ENCODE measurements at regions of chr3 and their contacts with region 1.

Region 1: GRCh38 chr3:190996181-190996775 is 133.8 kb upstream of the GMNC start:
- DNase-seq: no peak
- H3K4me3 ChIP-seq: no peak overlapping the region
- H3K27ac ChIP-seq: peak overlapping the region; percentile 54
- H3K4me1 ChIP-seq: peaks cover 37% of the 10 kb centered on the region
- H3K27me3 ChIP-seq: no peaks in the 10 kb centered on the region
- CTCF ChIP-seq: no peak

Region 2: GRCh38 chr3:190533511-190534277 is 462.6 kb before region 1 on chr3:
- CTCF ChIA-PET with region 1: no interaction called
- POLR2A ChIA-PET with region 1: no interaction called
- intact Hi-C with region 1: loop called (anchors 10 kb)
- DNase-seq: peak; percentile 95
- H3K4me3 ChIP-seq: peak overlapping the region; percentile 31
- H3K27ac ChIP-seq: peak overlapping the region; percentile 93
- H3K4me1 ChIP-seq: peaks cover 94% of the 10 kb centered on the region
- H3K27me3 ChIP-seq: no peaks in the 10 kb centered on the region
- CTCF ChIP-seq: no peak

Region 3: DNA sequence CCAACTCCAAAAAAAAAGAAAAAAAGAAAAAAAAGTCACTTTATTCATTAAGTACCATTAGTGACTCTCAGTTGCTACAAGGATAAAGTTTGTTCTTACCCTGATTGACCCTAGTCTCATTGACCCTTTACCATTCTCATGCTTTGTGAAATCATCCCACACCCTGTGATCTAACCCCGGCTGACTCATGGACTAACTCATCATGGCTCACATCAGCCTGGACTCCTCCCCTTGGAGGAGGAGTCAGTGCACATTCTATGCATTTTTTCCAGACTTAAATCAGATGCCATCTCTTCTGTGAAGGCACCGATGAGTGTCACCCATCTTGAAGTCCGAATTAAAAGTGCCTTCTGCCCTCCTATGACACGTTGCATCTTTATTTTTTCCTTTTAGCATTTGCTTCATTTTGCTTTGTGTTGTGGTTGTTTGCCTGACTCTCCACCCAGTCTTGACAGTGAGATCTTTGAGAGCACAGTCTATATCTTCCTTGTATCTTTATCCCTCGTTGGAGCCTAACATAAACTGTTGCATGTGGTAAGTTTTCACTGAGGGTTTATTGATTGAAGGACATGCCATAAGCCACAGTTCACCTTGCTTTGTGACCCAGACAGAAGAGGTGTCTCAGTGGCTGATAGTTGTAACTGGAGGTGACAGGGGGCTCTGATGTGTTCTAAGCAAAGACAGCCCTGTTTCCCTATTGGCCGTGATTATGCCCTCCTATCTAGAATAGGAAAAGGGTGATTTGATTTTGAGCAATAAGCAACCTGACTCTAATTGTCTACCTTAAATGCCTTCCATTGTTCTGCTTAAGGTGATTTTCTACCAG is 410.3 kb before region 1 on chr3:
- CTCF ChIA-PET with region 1: no interaction called
- POLR2A ChIA-PET with region 1: no interaction called
- intact Hi-C with region 1: no loop called
- DNase-seq: peak; percentile 93
- H3K4me3 ChIP-seq: peak overlapping the region; percentile 24
- H3K27ac ChIP-seq: peak overlapping the region; percentile 88
- H3K4me1 ChIP-seq: peaks cover 79% of the 10 kb centered on the region
- H3K27me3 ChIP-seq: no peaks in the 10 kb centered on the region
- CTCF ChIP-seq: no peak

Region 4: DNA sequence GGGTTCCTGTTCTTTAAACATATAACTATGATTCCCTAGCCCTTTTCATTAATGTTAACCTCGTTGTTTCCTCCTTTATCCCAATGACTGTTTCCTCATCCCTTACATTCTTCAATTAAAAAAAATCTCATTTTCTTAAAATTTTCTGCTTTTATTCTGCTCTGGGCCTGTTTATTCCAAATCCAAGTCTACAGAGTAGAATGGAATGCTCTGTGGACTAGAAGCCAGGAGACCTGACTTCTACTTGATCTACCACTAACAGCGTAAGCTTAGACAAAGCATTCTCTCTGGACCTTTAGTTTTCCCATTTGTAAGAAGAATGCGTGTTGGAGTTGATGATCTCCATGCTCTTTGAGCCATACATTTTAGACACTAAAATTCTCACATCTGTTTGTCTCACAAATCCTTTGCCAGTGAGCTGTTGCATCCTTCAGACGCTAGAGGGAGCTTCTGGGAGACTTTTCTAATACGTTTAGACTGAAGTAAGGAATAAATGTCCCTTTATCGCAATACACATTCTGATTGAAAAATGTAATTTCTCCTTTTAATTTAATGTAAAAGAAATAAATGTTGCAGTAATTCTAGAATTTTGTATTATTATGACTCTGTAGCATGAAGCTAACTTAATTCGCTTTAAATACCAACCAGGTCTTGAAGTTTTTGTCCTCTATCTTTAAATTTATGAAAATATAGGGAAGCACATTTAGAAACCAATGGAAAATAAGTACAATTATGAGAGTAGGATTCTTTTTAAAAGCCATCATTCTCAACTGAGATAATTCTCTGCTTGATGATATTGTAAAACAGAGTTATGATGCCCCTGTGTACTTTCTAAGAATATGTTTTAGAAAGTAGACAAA is 112.1 kb before region 1 on chr3:
- CTCF ChIA-PET with region 1: no interaction called
- POLR2A ChIA-PET with region 1: no interaction called
- intact Hi-C with region 1: loop called (anchors 5 kb)
- DNase-seq: peak; percentile 90
- H3K4me3 ChIP-seq: no peak overlapping the region
- H3K27ac ChIP-seq: no peak overlapping the region
- H3K4me1 ChIP-seq: peaks cover 14% of the 10 kb centered on the region
- H3K27me3 ChIP-seq: no peaks in the 10 kb centered on the region
- CTCF ChIP-seq: peak; percentile 97

Measured in A673 (cell line).